CD8-positive, alpha-beta T cell (primary cell): ENCODE measurements at regions of chr6 and their contacts with region 1.

Region 1: GRCh38 chr6:1554476-1555310 is 55.0 kb upstream of the FOXC1 start:
- DNase-seq: peak; percentile 27 to 81 (median 71)
- ATAC-seq: peak; percentile 87
- H3K4me3 ChIP-seq: peak overlapping the region; percentile 50 to 58
- H3K4me3 Mint-ChIP-seq: peak overlapping the region; percentile 80
- H3K27ac ChIP-seq: peak overlapping the region in 1 of 2 experiments; percentile 62
- H3K27ac Mint-ChIP-seq: no peak overlapping the region
- H3K4me1 ChIP-seq: peaks cover 12% of the 10 kb centered on the region
- H3K4me1 Mint-ChIP-seq: peaks cover 10% of the 10 kb centered on the region
- H3K27me3 ChIP-seq: no peaks in the 10 kb centered on the region
- H3K27me3 Mint-ChIP-seq: peaks cover 35% of the 10 kb centered on the region
- CTCF ChIP-seq: peak; percentile 59

Region 2: DNA sequence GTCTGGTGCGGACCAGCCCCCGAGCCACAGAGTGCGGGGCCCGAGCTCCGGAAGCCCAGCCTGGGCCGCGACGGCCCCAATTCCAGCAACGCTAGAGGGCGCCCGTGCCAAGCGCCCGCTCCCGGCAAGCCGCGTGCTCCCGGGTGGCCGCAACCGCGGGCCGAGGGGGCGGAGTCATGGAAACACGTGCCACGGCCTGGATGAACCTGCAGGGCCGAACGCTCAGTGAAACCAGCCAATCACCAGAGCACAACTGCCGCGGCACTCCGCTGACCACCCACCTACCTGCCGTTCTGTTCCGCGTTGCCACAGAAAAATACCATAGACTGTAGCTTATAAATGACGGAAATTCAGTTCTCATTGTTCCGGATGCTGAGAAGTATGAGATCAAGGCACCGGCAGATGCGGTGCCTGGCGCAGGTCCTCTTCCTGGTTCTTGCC is 30.6 kb before region 1 on chr6:
- CTCF ChIA-PET with region 1: interaction called, 15 read pairs
- POLR2A ChIA-PET with region 1: interaction called, 6 read pairs
- intact Hi-C with region 1: loop called (anchors 1 to 2 kb)
- DNase-seq: peak; percentile 22 to 84 (median 73)
- ATAC-seq: peak; percentile 68
- H3K4me3 ChIP-seq: peak overlapping the region; percentile 25 to 43
- H3K4me3 Mint-ChIP-seq: peak overlapping the region; percentile 68
- H3K27ac ChIP-seq: peak overlapping the region; percentile 6 to 46
- H3K27ac Mint-ChIP-seq: peak overlapping the region; percentile 12
- H3K4me1 ChIP-seq: peaks cover 45% of the 10 kb centered on the region
- H3K4me1 Mint-ChIP-seq: peaks cover 26% of the 10 kb centered on the region
- H3K27me3 ChIP-seq: peaks cover 0 to 9% of the 10 kb centered on the region in 2 experiments
- H3K27me3 Mint-ChIP-seq: peaks cover 9% of the 10 kb centered on the region
- CTCF ChIP-seq: peak; percentile 65

Region 3: DNA sequence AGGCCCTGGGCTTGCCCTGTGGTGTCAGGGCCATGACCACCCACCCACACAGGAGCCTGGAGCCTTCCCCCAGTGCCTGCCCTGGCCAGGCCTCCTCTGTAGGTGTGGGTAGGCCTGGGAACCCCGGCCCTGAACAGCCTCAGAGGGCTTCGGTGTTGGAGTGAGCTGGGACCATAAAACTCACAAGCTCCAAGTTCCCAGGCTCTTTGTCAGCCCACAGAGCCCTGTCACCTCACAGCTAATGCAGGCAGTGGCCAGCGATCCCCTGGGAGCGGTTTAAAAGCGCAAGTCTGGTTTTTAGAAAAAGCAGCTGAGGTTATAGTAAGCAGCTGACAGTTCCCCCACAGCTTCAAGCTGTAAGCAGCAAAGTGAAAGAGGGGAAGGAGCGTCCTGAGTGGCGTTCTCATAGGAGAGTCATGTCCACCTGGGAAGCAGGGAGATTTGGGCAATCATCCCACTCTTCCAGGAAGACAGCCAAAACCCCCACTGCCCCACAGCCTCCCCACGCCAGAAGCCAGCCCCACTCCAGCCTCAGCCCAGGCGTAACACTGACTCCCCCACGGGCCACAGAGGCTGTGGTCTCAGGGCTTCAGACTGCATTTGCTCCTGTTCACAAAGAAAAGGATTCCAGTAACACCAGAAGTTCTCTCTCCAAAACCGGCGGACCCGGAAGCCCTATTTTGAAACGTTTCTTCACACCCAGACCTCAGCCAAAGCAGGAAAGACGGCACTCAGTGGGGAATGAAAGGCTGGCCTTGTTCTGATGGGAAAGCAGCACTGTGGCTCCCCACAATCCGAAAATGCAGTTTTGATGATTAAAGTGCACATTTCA is 20.7 kb after region 1 on chr6:
- CTCF ChIA-PET with region 1: no interaction called
- POLR2A ChIA-PET with region 1: no interaction called
- intact Hi-C with region 1: no loop called
- DNase-seq: no peak
- ATAC-seq: no peak
- H3K4me3 ChIP-seq: no peak overlapping the region
- H3K4me3 Mint-ChIP-seq: no peak overlapping the region
- H3K27ac ChIP-seq: no peak overlapping the region
- H3K27ac Mint-ChIP-seq: no peak overlapping the region
- H3K4me1 ChIP-seq: no peaks in the 10 kb centered on the region
- H3K4me1 Mint-ChIP-seq: no peaks in the 10 kb centered on the region
- H3K27me3 ChIP-seq: no peaks in the 10 kb centered on the region
- H3K27me3 Mint-ChIP-seq: peaks cover 25% of the 10 kb centered on the region
- CTCF ChIP-seq: no peak

Region 4: GRCh38 chr6:1645470-1646185 is 90.9 kb after region 1 on chr6:
- CTCF ChIA-PET with region 1: no interaction called
- POLR2A ChIA-PET with region 1: no interaction called
- intact Hi-C with region 1: no loop called
- DNase-seq: no peak
- ATAC-seq: no peak
- H3K4me3 ChIP-seq: no peak overlapping the region
- H3K4me3 Mint-ChIP-seq: no peak overlapping the region
- H3K27ac ChIP-seq: no peak overlapping the region
- H3K27ac Mint-ChIP-seq: no peak overlapping the region
- H3K4me1 ChIP-seq: no peaks in the 10 kb centered on the region
- H3K4me1 Mint-ChIP-seq: no peaks in the 10 kb centered on the region
- H3K27me3 ChIP-seq: no peaks in the 10 kb centered on the region
- H3K27me3 Mint-ChIP-seq: no peaks in the 10 kb centered on the region
- CTCF ChIP-seq: no peak

Region 5: GRCh38 chr6:1872649-1873131 is 318.0 kb after region 1 on chr6:
- CTCF ChIA-PET with region 1: no interaction called
- POLR2A ChIA-PET with region 1: no interaction called
- intact Hi-C with region 1: no loop called
- DNase-seq: no peak
- ATAC-seq: no peak
- H3K4me3 ChIP-seq: no peak overlapping the region
- H3K4me3 Mint-ChIP-seq: no peak overlapping the region
- H3K27ac ChIP-seq: no peak overlapping the region
- H3K27ac Mint-ChIP-seq: no peak overlapping the region
- H3K4me1 ChIP-seq: no peaks in the 10 kb centered on the region
- H3K4me1 Mint-ChIP-seq: no peaks in the 10 kb centered on the region
- H3K27me3 ChIP-seq: no peaks in the 10 kb centered on the region
- H3K27me3 Mint-ChIP-seq: no peaks in the 10 kb centered on the region
- CTCF ChIP-seq: no peak